MCF 10A (cell line): ENCODE measurements at regions of chr3 and their contacts with region 1.

Region 1: GRCh38 chr3:58414538-58415197 is 19.0 kb downstream of the PDHB start:
- DNase-seq: peak; percentile 74
- H3K4me3 Mint-ChIP-seq: no peak overlapping the region
- H3K27ac Mint-ChIP-seq: no peak overlapping the region
- H3K4me1 Mint-ChIP-seq: peaks cover 5% of the 10 kb centered on the region
- H3K27me3 Mint-ChIP-seq: no peaks in the 10 kb centered on the region
- CTCF ChIP-seq: peak; percentile 66

Region 2: GRCh38 chr3:58177747-58178527 is 236.7 kb before region 1 on chr3:
- CTCF ChIA-PET with region 1: interaction called, 11 read pairs
- POLR2A ChIA-PET with region 1: interaction called, 3 read pairs
- intact Hi-C with region 1: no loop called
- DNase-seq: peak; percentile 78
- H3K4me3 Mint-ChIP-seq: peak overlapping the region; percentile 51
- H3K27ac Mint-ChIP-seq: no peak overlapping the region
- H3K4me1 Mint-ChIP-seq: peaks cover 24% of the 10 kb centered on the region
- H3K27me3 Mint-ChIP-seq: no peaks in the 10 kb centered on the region
- CTCF ChIP-seq: peak; percentile 82

Region 3: GRCh38 chr3:58317811-58318210 is 96.9 kb before region 1 on chr3:
- CTCF ChIA-PET with region 1: interaction called, 30 read pairs
- POLR2A ChIA-PET with region 1: interaction called, 3 read pairs
- intact Hi-C with region 1: loop called (anchors 1 kb)
- DNase-seq: no peak
- H3K4me3 Mint-ChIP-seq: no peak overlapping the region
- H3K27ac Mint-ChIP-seq: no peak overlapping the region
- H3K4me1 Mint-ChIP-seq: no peaks in the 10 kb centered on the region
- H3K27me3 Mint-ChIP-seq: no peaks in the 10 kb centered on the region
- CTCF ChIP-seq: no peak

Region 4: DNA sequence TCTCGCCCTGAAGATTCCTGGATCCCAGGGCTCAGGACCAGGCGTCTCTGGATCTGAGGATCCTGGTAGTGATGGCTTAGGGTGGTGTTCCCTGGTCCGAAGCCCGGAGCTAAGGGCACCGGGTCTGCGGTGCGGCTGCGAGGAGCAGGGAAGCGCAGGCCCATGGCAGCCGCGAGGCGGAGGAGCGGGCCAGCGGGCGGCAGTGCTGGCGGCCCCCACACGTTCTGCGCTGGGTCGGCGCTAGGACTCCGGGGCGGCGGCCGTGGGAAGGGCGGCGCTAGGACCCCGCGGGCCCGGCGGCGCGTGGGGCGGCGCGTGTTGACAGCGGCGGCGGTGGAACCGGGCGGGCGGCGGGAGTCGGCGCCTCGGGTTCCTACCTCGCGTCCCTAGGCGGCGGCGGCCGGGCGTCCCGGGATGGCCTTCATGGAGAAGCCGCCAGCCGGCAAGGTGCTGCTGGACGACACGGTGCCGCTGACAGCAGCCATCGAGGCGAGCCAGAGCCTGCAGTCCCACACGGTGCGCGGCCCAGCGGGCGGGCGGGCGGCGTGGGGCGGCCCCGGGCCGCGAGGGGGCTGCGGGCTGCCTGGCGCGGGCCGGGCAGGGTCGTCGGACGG is 82.0 kb before region 1 on chr3 and contains the start of gene PXK:
- CTCF ChIA-PET with region 1: interaction called, 27 read pairs
- POLR2A ChIA-PET with region 1: interaction called, 16 read pairs
- intact Hi-C with region 1: loop called (anchors 1 kb)
- DNase-seq: peak; percentile 71
- H3K4me3 Mint-ChIP-seq: peak within 1 kb of the TSS; percentile 78
- H3K27ac Mint-ChIP-seq: peak within 1 kb of the TSS; percentile 93
- H3K4me1 Mint-ChIP-seq: peaks cover 22% of the 10 kb centered on the region
- H3K27me3 Mint-ChIP-seq: no peaks in the 10 kb centered on the region
- CTCF ChIP-seq: no peak
- total RNA-seq, gene PXK: 55.1 and 62.2 TPM in 2 replicates

Region 5: DNA sequence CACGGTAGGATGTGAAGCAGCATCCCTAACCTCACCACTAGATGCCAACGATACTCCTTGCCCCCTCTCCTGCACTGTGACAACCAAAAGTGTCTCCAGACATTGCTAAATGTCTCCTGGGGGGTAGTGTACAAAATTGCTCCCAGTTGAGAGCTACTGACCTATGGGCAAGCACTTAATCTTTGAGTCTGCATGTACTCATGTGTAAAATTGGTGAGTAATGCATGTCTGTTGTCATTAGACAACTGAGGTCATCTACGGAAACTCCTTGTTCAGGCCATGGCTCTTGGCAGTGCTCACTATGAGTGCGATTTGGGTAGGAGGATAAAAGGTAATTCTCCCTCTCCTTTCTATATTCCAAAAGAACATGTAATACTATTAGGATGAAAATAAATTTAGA is 10.3 kb before region 1 on chr3:
- CTCF ChIA-PET with region 1: interaction called, 22 read pairs
- POLR2A ChIA-PET with region 1: interaction called, 3 read pairs
- intact Hi-C with region 1: no loop called
- DNase-seq: peak; percentile 44
- H3K4me3 Mint-ChIP-seq: no peak overlapping the region
- H3K27ac Mint-ChIP-seq: no peak overlapping the region
- H3K4me1 Mint-ChIP-seq: peaks cover 10% of the 10 kb centered on the region
- H3K27me3 Mint-ChIP-seq: no peaks in the 10 kb centered on the region
- CTCF ChIP-seq: no peak

Region 6: GRCh38 chr3:58463181-58463941 is 48.7 kb after region 1 on chr3:
- CTCF ChIA-PET with region 1: no interaction called
- POLR2A ChIA-PET with region 1: no interaction called
- intact Hi-C with region 1: no loop called
- DNase-seq: peak; percentile 95
- H3K4me3 Mint-ChIP-seq: no peak overlapping the region
- H3K27ac Mint-ChIP-seq: peak overlapping the region; percentile 71
- H3K4me1 Mint-ChIP-seq: peaks cover 20% of the 10 kb centered on the region
- H3K27me3 Mint-ChIP-seq: no peaks in the 10 kb centered on the region
- CTCF ChIP-seq: peak; percentile 89